Stomach (tissue), 19 donors: ENCODE measurements at regions of chr9 and their contacts with region 1.

Region 1: DNA sequence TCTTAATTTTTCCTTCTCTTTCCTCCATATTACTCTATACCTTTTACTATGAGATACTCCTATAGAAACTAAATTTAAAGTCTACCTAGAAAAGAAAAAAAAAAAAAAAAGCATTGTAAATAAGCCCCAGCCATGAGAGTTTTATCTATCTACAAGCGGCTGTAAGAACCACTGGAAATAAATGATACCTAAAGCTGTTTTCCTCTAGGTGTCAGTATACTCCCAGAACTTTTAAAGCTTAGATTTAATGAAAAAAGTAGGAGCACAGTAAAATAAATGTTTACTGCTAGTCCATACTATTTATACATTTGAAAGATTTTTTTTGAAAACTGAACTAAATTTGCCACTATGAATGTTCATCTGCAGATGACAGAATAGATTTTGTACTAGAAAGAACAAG is 26.2 kb downstream of the TYRP1 start:
- DNase-seq: peak in 1 of 2 donors; percentile 58
- H3K4me3 ChIP-seq: no peak overlapping the region
- H3K27ac ChIP-seq: no peak overlapping the region
- H3K4me1 ChIP-seq: no peaks in the 10 kb centered on the region
- H3K27me3 ChIP-seq: no peaks in the 10 kb centered on the region
- CTCF ChIP-seq: peak in 4 of 7 experiments; percentile 24 to 44 (median 32)
- EP300 ChIP-seq: no peak
- POLR2A ChIP-seq: no peak

Region 2: GRCh38 chr9:12884737-12885414 is 165.4 kb after region 1 on chr9:
- intact Hi-C with region 1: loop called (anchors 5 kb)
- DNase-seq: peak in 1 of 2 donors; percentile 68
- H3K4me3 ChIP-seq: no peak overlapping the region
- H3K27ac ChIP-seq: no peak overlapping the region
- H3K4me1 ChIP-seq: peaks cover 0 to 34% (median 12%) of the 10 kb centered on the region in 4 donors
- H3K27me3 ChIP-seq: no peaks in the 10 kb centered on the region
- CTCF ChIP-seq: peak in 4 of 7 experiments; percentile 30 to 76 (median 63)
- EP300 ChIP-seq: no peak
- POLR2A ChIP-seq: no peak

Region 3: DNA sequence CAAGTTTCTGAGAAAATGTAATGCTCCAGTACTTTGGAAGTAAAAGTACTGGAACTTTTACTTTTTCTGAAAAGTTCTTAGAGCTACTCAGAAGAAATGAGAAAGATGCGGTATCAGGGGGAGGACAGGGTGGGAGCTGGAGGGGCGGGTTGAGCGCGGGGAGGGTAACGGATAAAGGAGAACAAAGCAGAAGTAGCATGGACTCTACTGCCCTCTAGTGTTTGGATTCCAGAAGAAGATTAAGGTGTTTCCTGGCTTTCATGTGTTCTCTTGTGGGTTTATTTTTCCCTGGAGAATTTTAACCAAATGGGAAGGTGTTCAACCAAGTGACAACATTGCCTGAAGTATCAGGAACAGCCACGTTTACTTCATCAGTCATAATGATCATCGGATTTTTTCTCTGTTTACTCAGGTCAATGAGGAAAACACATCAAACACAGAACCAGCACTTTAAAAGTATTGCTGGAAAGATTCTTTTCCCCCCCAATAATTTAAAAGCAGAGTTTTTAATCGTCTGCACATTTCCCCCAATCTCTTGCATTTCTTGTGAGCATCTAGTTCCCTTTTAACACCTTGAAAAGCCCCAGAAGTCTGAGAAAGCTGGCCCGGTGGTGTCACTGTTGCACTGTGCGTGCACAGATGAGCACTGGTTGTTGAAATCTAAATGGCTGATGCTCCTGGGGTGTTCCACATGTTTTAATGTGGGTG is 369.4 kb after region 1 on chr9:
- intact Hi-C with region 1: loop called (anchors 10 kb)
- DNase-seq: peak in 1 of 2 donors; percentile 86
- H3K4me3 ChIP-seq: no peak overlapping the region
- H3K27ac ChIP-seq: no peak overlapping the region
- H3K4me1 ChIP-seq: peaks cover 0 to 9% (median 0%) of the 10 kb centered on the region in 4 donors
- H3K27me3 ChIP-seq: no peaks in the 10 kb centered on the region
- CTCF ChIP-seq: peak in 5 of 7 experiments; percentile 47 to 66 (median 54)
- EP300 ChIP-seq: no peak
- POLR2A ChIP-seq: no peak